ENCODE measurements at regions of chr1 and their contacts with region 1.

Region 1: GRCh38 chr1:149962123-149962548 is 25.5 kb upstream of the MTMR11 start:
- DNase-seq: peak; percentile 50
- H3K27ac ChIP-seq: no peak overlapping the region
- CTCF ChIP-seq: peak; percentile 79

Region 2: GRCh38 chr1:149844101-149844500 is 118.0 kb before region 1 on chr1:
- CTCF ChIA-PET with region 1: no interaction called
- POLR2A ChIA-PET with region 1: no interaction called
- DNase-seq: peak; percentile 35
- H3K27ac ChIP-seq: no peak overlapping the region
- CTCF ChIP-seq: no peak

Region 3: GRCh38 chr1:149978547-149979023 is 16.4 kb after region 1 on chr1:
- CTCF ChIA-PET with region 1: no interaction called
- POLR2A ChIA-PET with region 1: no interaction called
- DNase-seq: peak; percentile 25
- H3K27ac ChIP-seq: no peak overlapping the region
- CTCF ChIP-seq: no peak

Region 4: GRCh38 chr1:149997585-149998262 is 35.6 kb after region 1 on chr1:
- CTCF ChIA-PET with region 1: no interaction called
- POLR2A ChIA-PET with region 1: no interaction called
- DNase-seq: no peak
- H3K27ac ChIP-seq: no peak overlapping the region
- CTCF ChIP-seq: no peak

Region 5: GRCh38 chr1:150049926-150050325 is 87.8 kb after region 1 on chr1:
- CTCF ChIA-PET with region 1: interaction called, 14 read pairs
- POLR2A ChIA-PET with region 1: no interaction called
- DNase-seq: no peak
- H3K27ac ChIP-seq: no peak overlapping the region
- CTCF ChIP-seq: no peak

Measured in RWPE1 (cell line).